Heart right ventricle (tissue), 16 donors: ENCODE measurements at regions of chr10 and their contacts with region 1.

Region 1: GRCh38 chr10:61903221-61903927 is 1.9 kb downstream of the ARID5B start:
- DNase-seq: peak; percentile 46 to 67
- ATAC-seq: peak; percentile 71 to 90 (median 79)
- H3K4me3 ChIP-seq: peak overlapping the region; percentile 34 to 94 (median 76)
- H3K27ac ChIP-seq: peak overlapping the region; percentile 72 to 99 (median 94)
- H3K4me1 ChIP-seq: peaks cover 6 to 41% (median 17%) of the 10 kb centered on the region in 9 donors
- H3K27me3 ChIP-seq: no peaks in the 10 kb centered on the region
- CTCF ChIP-seq: peak in 6 of 9 donors; percentile 13 to 49 (median 40)

Region 2: GRCh38 chr10:61857746-61858145 is 45.6 kb before region 1 on chr10:
- intact Hi-C with region 1: no loop called
- DNase-seq: no peak
- ATAC-seq: no peak
- H3K4me3 ChIP-seq: no peak overlapping the region
- H3K27ac ChIP-seq: no peak overlapping the region
- H3K4me1 ChIP-seq: no peaks in the 10 kb centered on the region
- H3K27me3 ChIP-seq: no peaks in the 10 kb centered on the region
- CTCF ChIP-seq: no peak

Region 3: GRCh38 chr10:61961278-61961677 is 57.9 kb after region 1 on chr10:
- intact Hi-C with region 1: loop called in 1 of 10 experiments (anchors 10 kb)
- DNase-seq: no peak
- ATAC-seq: no peak
- H3K4me3 ChIP-seq: no peak overlapping the region
- H3K27ac ChIP-seq: peak overlapping the region in 1 of 10 donors; percentile 0
- H3K4me1 ChIP-seq: peaks cover 0 to 44% (median 14%) of the 10 kb centered on the region in 9 donors
- H3K27me3 ChIP-seq: no peaks in the 10 kb centered on the region
- CTCF ChIP-seq: no peak

Region 4: GRCh38 chr10:61987951-61988379 is 84.6 kb after region 1 on chr10:
- intact Hi-C with region 1: loop called in 4 of 10 experiments (anchors 5 to 10 kb)
- DNase-seq: no peak
- ATAC-seq: peak in 3 of 8 donors; percentile 33 to 43 (median 34)
- H3K4me3 ChIP-seq: peak overlapping the region in 2 of 10 donors; percentile 9 to 18
- H3K27ac ChIP-seq: peak overlapping the region in 9 of 10 donors; percentile 4 to 73 (median 54)
- H3K4me1 ChIP-seq: peaks cover 0 to 58% (median 33%) of the 10 kb centered on the region in 9 donors
- H3K27me3 ChIP-seq: no peaks in the 10 kb centered on the region
- CTCF ChIP-seq: no peak

Region 5: GRCh38 chr10:62038609-62039190 is 135.3 kb after region 1 on chr10:
- intact Hi-C with region 1: loop called in 6 of 10 experiments (anchors 2 to 10 kb)
- DNase-seq: peak; percentile 63 to 86
- ATAC-seq: peak; percentile 53 to 78 (median 71)
- H3K4me3 ChIP-seq: peak overlapping the region in 8 of 10 donors; percentile 7 to 46 (median 26)
- H3K27ac ChIP-seq: peak overlapping the region in 5 of 10 donors; percentile 7 to 29 (median 24)
- H3K4me1 ChIP-seq: peaks cover 0 to 45% (median 36%) of the 10 kb centered on the region in 9 donors
- H3K27me3 ChIP-seq: no peaks in the 10 kb centered on the region
- CTCF ChIP-seq: peak; percentile 78 to 95 (median 86)

Region 6: DNA sequence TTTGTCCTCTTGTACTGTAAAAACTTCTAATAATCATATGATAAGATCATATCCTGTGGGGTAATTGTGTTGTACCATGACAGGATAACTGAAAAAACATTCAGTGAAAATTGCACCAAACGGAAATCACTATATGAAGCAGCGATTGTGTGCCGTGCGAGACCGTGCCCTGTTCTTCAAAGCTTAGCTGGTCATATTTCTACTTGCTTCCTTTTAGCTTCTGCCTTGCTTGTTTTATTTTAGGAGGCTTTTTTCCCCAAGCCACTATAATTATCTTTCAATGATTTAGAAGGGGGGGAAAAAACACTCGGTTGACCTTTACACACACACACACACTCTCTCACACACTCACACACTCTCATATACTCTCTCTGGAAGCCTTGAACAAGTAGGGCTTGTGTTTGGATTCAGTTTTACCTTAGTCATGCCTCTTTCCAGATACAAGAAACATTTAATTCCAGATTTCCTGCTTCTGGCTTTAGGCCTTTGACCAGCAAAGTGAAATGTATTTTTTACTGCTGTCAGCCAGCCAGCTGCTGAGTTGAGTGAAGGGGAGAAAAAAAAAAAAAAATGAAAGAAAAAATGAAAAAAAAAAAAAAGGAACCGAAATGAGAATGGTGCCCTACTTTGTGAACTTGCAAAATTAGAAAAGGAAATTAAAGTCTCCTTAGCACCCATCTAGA is 179.5 kb after region 1 on chr10:
- intact Hi-C with region 1: loop called in 1 of 10 experiments (anchors 5 kb)
- DNase-seq: peak in 1 of 2 donors; percentile 43
- ATAC-seq: peak; percentile 36 to 68 (median 54)
- H3K4me3 ChIP-seq: peak overlapping the region in 7 of 10 donors; percentile 1 to 27 (median 17)
- H3K27ac ChIP-seq: peak overlapping the region; percentile 63 to 93 (median 88)
- H3K4me1 ChIP-seq: peaks cover 18 to 69% (median 59%) of the 10 kb centered on the region in 9 donors
- H3K27me3 ChIP-seq: no peaks in the 10 kb centered on the region
- CTCF ChIP-seq: no peak